GM18951 (cell line): ENCODE measurements at regions of chr5 and their contacts with region 1.

Region 1: DNA sequence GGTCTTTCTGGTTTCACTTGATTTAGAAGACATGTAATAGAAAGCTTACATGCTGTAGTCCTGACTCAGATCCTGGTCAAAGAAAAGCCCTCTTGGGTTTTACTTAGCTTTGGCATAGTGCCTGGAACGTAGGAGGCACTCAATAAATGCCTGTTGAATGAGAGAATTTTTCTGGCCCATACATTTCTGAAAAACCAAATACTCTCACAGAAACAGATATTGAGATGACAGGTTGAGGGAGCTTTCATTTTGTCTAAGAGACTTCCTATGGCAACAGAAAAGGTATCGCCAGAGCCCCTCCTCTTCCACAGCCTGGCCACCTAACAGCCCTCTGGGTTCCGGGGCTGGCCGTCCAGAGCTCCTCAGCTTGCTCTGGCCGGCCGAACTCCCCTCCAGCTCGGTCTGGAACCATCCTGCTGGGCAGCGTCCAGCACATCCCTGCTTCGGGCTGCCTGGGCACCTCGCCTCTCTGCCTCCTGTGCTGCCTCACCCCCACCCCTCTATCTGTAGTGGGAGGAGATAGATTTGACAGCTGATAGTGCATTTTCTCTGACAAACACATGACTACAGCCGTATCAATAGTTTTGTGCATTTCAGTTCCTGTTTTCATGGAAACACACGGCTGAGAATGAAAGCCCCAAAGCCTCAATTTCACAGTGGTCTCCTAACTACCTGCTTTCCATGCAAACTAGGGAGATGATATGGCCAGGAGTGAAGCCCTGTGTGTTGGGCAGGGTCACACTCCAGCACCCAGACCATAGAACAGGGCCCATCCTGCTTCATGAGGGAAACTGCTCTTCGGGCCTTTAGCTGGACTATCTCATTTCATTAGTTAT is 1.1 kb downstream of the IL4 start:
- POLR2A ChIP-seq: peak; percentile 57

Region 2: DNA sequence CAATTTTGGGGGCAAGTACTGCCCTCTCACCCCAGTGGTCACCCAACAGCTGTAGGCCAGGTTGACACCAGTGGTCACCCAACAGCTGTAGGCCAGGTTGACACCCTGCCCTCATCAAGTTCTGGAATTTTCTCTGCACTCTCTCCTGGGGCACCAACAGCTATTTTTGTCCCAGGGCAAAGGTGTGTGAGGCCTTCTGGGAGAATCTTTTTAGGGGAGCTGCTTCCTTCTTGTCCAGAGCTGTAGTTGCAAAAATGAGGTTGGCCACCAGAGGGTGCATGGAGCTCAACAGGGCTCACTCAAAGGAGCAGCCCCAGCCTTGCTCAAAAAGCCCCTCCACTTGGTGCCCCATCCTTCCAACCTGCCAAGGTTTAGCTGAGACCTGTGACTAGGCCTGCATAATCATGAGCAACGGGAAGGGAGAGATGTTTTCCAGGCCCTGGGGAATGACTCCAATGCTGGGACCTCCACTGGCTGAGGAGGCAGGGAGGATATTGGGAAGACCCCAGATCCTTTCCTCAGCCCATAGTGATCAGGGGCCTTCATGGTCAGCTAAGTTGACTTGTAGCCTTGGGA is 436.6 kb before region 1 on chr5:
- in situ Hi-C with region 1: no loop called
- POLR2A ChIP-seq: no peak

Region 3: GRCh38 chr5:132490486-132491367 is 184.2 kb before region 1 on chr5 and contains the start of gene IRF1:
- in situ Hi-C with region 1: no loop called
- POLR2A ChIP-seq: peak; percentile 99

Region 4: DNA sequence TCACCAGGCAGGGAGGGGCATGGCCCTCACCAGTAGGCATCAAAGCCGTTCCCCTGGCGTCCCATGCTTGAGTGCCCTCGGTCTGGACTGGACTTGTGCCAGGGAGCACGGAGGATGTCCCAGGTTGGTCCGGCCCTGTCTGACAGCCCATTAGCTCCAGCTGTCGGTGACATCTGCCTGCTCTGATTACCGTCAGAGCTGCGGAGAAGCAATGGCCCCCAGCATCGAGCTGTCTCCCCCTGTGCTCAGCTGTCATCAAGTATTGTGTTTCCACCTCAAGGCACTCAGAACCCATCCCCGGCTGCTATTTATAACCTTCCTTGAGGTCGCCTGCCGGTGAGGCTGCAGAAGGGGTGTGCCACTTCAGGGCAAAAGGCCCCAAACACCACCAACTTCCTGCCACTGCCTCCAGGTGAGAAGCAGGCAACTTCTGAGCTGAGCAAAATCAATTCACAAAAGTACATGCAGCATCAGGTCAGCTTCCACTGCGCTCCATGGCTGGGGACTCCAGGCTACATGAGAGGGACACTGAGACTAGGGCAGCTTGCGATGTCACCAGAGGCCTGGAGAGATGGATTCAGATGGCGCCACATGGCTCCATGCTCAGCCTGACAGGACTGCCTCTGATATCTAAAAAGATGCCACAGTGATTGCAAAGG is 1150.9 kb after region 1 on chr5:
- in situ Hi-C with region 1: loop called (anchors 25 kb)
- POLR2A ChIP-seq: no peak